CD4-positive, alpha-beta memory T cell (primary cell): ENCODE measurements at regions of chr2 and their contacts with region 1.

Region 1: DNA sequence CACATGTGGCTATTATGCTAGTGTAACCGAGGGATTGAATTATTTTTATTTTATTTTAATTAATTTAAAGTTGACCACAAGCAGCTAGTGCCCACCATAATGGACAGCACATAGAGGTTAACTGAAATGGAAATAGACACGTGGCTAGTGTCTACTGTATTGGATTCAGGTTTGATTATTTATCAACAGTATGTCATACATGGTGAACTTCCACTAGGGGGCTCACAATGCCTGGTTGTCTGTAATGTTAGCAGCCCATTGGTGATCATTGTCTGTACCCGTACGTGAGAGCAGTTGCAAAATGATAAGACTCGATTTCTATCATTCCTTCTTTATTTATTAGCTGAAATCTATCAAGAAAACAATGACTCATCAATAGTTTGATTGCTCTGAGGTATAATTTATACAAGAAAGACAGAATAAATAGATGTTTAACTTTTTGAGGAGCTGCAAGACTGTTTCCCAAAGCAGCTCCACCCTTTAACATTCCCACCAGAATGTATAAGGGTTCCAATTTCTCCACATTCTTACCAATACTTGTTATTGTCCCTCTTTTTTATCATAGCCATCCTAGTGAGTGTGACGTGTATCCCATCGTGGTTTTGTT is 76.5 kb downstream of the CYBRD1 start:
- DNase-seq: peak; percentile 44 to 60 (median 54)
- H3K4me3 ChIP-seq: no peak overlapping the region
- H3K4me3 Mint-ChIP-seq: peak overlapping the region in 1 of 8 donors; percentile 47
- H3K27ac ChIP-seq: no peak overlapping the region
- H3K27ac Mint-ChIP-seq: no peak overlapping the region
- H3K4me1 ChIP-seq: no peaks in the 10 kb centered on the region
- H3K4me1 Mint-ChIP-seq: peaks cover 0 to 4% (median 2%) of the 10 kb centered on the region in 4 donors
- H3K27me3 ChIP-seq: no peaks in the 10 kb centered on the region
- H3K27me3 Mint-ChIP-seq: peaks cover 0 to 2% of the 10 kb centered on the region in 2 donors

Region 2: DNA sequence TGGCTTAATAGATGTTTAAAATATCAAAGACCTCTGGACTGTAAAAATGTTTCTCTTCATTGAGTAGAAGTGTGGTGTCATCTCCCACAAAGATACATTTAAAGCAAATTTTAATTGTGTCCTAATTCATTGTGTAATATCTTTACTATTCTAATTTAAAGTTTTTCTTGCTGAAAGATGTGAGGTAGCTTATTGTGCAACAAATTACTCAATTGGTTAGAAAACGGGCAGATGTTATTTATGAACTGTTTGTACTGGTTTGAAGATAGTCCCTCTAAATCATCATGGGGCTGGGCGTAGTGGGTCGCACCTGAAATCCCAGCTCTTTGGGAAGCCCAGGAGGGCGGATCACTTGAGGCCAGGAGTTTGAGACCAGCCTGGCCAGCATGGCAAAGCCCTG is 11.2 kb before region 1 on chr2:
- CTCF ChIA-PET with region 1: interaction called, 26 read pairs
- POLR2A ChIA-PET with region 1: no interaction called
- intact Hi-C with region 1: no loop called
- DNase-seq: no peak
- H3K4me3 ChIP-seq: no peak overlapping the region
- H3K4me3 Mint-ChIP-seq: no peak overlapping the region
- H3K27ac ChIP-seq: no peak overlapping the region
- H3K27ac Mint-ChIP-seq: no peak overlapping the region
- H3K4me1 ChIP-seq: no peaks in the 10 kb centered on the region
- H3K4me1 Mint-ChIP-seq: peaks cover 0 to under 1% (median 0%) of the 10 kb centered on the region in 4 donors
- H3K27me3 ChIP-seq: no peaks in the 10 kb centered on the region
- H3K27me3 Mint-ChIP-seq: peaks cover 6 to 20% of the 10 kb centered on the region in 2 donors

Region 3: DNA sequence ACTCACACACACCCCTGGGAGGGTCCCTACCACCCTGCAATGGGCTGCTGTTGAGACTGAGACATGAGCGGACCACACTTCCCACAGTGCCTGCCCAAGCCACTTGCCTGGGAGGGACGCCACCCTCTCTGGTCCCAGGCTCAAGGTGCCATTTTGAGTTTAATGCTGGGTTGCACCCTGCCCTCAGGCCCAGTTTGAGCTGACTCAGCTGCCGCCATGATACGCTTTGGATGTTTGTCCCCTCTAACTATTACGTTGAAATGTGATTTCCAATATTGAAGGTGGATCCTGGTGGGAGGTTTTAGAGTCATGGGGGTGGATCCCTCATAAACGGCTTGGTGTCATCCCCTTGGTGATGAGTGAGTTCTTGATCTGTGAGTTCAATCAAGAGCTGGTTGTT is 12.0 kb after region 1 on chr2:
- CTCF ChIA-PET with region 1: interaction called, 30 read pairs
- POLR2A ChIA-PET with region 1: no interaction called
- intact Hi-C with region 1: no loop called
- DNase-seq: no peak
- H3K4me3 ChIP-seq: no peak overlapping the region
- H3K4me3 Mint-ChIP-seq: no peak overlapping the region
- H3K27ac ChIP-seq: no peak overlapping the region
- H3K27ac Mint-ChIP-seq: no peak overlapping the region
- H3K4me1 ChIP-seq: no peaks in the 10 kb centered on the region
- H3K4me1 Mint-ChIP-seq: peaks cover 0 to 2% (median 0%) of the 10 kb centered on the region in 4 donors
- H3K27me3 ChIP-seq: no peaks in the 10 kb centered on the region
- H3K27me3 Mint-ChIP-seq: peaks cover 7 to 11% of the 10 kb centered on the region in 2 donors

Region 4: GRCh38 chr2:172484253-172484652 is 885.4 kb after region 1 on chr2:
- CTCF ChIA-PET with region 1: interaction called, 3 read pairs
- POLR2A ChIA-PET with region 1: no interaction called
- intact Hi-C with region 1: loop called (anchors 2 kb)
- DNase-seq: peak in 4 of 5 donors; percentile 25 to 34 (median 32)
- H3K4me3 ChIP-seq: no peak overlapping the region
- H3K4me3 Mint-ChIP-seq: no peak overlapping the region
- H3K27ac ChIP-seq: no peak overlapping the region
- H3K27ac Mint-ChIP-seq: peak overlapping the region in 5 of 7 donors; percentile 23 to 76 (median 66)
- H3K4me1 ChIP-seq: peaks cover 6% of the 10 kb centered on the region
- H3K4me1 Mint-ChIP-seq: peaks cover 26 to 51% (median 34%) of the 10 kb centered on the region in 4 donors
- H3K27me3 ChIP-seq: no peaks in the 10 kb centered on the region
- H3K27me3 Mint-ChIP-seq: no peaks in the 10 kb centered on the region

Region 5: DNA sequence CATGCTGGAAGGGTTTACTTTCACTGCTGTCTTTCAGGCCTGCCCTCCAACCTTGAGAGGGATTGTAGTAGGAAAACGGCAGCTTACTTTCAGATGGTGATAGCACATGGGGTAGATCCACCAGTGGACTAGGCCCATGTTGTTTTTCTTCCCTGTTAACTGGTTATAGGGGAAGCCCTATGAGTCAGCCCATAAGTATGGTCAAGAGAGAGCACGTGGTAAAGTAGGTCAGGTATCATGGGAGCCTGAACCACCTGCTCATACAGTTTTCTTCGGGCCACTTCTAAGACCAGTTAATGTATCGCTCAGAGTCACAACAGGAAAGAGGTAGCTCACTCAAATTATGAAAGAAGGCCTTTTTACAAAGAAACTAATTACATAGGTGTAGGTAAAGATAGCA is 990.1 kb after region 1 on chr2:
- CTCF ChIA-PET with region 1: interaction called, 3 read pairs
- POLR2A ChIA-PET with region 1: no interaction called
- intact Hi-C with region 1: loop called (anchors 1 kb)
- DNase-seq: no peak
- H3K4me3 ChIP-seq: no peak overlapping the region
- H3K4me3 Mint-ChIP-seq: no peak overlapping the region
- H3K27ac ChIP-seq: no peak overlapping the region
- H3K27ac Mint-ChIP-seq: no peak overlapping the region
- H3K4me1 ChIP-seq: peaks cover 7% of the 10 kb centered on the region
- H3K4me1 Mint-ChIP-seq: peaks cover 11 to 25% (median 18%) of the 10 kb centered on the region in 4 donors
- H3K27me3 ChIP-seq: no peaks in the 10 kb centered on the region
- H3K27me3 Mint-ChIP-seq: no peaks in the 10 kb centered on the region

Region 6: GRCh38 chr2:172710584-172711024 is 1111.8 kb after region 1 on chr2:
- CTCF ChIA-PET with region 1: no interaction called
- POLR2A ChIA-PET with region 1: no interaction called
- intact Hi-C with region 1: loop called (anchors 1 kb)
- DNase-seq: peak in 4 of 5 donors; percentile 11 to 31 (median 22)
- H3K4me3 ChIP-seq: no peak overlapping the region
- H3K4me3 Mint-ChIP-seq: no peak overlapping the region
- H3K27ac ChIP-seq: no peak overlapping the region
- H3K27ac Mint-ChIP-seq: no peak overlapping the region
- H3K4me1 ChIP-seq: no peaks in the 10 kb centered on the region
- H3K4me1 Mint-ChIP-seq: no peaks in the 10 kb centered on the region
- H3K27me3 ChIP-seq: no peaks in the 10 kb centered on the region
- H3K27me3 Mint-ChIP-seq: peaks cover 11 to 19% of the 10 kb centered on the region in 2 donors